Activated T-helper 1 cell treated with anti-CD3 and anti-CD28 coated beads, Interleukin-12 subunit alpha, Interleukin-12 subunit beta, Interleukin-2, Interleukin-4 antibody, amounts not matched to agents 30 ng/mL and 10 ng/mL and 1 ng/mL, durations not matched to agents 14 hours and 24 hours and 36 hours (primary cell): ENCODE measurements at regions of chr7 and their contacts with region 1.

Region 1: GRCh38 chr7:24898691-24899090 is 81.3 kb downstream of the OSBPL3 start:
- DNase-seq: no peak
- H3K4me3 Mint-ChIP-seq: no peak overlapping the region
- H3K27ac Mint-ChIP-seq: peak overlapping the region; percentile 74
- H3K4me1 Mint-ChIP-seq: peaks cover 82% of the 10 kb centered on the region
- H3K27me3 Mint-ChIP-seq: no peaks in the 10 kb centered on the region

Region 2: DNA sequence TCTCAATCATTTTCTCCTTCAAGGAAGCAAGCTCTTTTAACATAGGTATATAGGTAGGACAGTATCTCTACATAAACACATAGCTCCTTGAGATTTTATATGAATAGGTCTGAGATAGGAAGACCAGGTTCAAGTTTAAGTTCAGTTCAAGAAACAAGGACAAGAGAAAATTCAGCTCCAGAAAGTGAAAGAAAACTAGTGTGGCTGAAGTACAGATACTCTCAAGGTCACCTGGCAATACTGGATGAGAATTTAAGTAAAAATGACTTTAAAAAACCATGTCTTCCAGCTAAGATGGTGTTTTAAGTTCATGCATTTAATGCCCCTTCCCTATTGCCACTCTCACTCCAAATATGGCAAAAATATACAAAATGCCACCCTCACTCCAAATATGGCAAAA is 10.0 kb before region 1 on chr7:
- intact Hi-C with region 1: loop called (anchors 1 kb)
- DNase-seq: no peak
- H3K4me3 Mint-ChIP-seq: no peak overlapping the region
- H3K27ac Mint-ChIP-seq: no peak overlapping the region
- H3K4me1 Mint-ChIP-seq: peaks cover 70% of the 10 kb centered on the region
- H3K27me3 Mint-ChIP-seq: no peaks in the 10 kb centered on the region

Region 3: DNA sequence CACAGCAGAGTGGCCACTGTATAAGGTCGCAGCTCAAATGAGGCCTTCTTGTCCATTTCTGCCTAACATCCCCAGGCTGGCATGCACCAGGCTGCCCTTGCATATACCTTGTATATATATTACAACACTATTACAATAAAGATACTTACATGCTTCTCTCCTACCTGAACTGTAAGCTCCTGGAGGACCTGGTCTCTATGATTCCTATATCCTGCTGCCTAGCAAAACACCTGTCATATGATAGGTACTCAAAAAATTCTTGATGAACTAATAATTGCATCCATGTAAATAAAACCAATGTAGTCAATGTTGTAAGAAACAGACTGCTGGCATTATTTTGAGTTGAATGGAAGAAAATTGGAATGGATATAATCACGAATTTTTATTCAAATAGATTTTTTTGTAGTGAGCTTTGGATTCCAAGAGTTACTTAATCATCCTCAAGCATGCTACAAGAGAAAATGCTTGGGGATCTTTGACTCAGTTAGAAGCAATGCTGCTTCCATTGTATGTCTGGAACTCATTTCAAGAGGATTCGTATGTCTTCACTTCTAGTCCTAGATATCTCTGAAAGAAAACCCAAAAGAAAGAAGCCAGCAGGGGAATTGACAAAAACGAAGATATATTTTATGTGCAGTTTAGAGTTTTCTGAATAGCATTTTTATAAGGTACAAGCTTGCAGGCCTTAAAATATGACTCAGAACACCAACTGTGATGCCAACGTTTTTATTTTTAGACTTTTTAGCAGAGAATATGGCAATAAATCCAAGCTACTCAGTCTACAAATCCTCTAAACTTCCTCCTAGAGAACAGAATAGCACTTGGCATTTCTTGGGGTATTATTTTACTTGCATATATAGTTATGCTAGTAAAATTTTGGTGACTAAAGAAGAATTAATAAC is 28.2 kb after region 1 on chr7:
- intact Hi-C with region 1: no loop called
- DNase-seq: no peak
- H3K4me3 Mint-ChIP-seq: no peak overlapping the region
- H3K27ac Mint-ChIP-seq: no peak overlapping the region
- H3K4me1 Mint-ChIP-seq: peaks cover 86% of the 10 kb centered on the region
- H3K27me3 Mint-ChIP-seq: no peaks in the 10 kb centered on the region